ENCODE measurements at regions of chr10 and their contacts with region 1.

Region 1: DNA sequence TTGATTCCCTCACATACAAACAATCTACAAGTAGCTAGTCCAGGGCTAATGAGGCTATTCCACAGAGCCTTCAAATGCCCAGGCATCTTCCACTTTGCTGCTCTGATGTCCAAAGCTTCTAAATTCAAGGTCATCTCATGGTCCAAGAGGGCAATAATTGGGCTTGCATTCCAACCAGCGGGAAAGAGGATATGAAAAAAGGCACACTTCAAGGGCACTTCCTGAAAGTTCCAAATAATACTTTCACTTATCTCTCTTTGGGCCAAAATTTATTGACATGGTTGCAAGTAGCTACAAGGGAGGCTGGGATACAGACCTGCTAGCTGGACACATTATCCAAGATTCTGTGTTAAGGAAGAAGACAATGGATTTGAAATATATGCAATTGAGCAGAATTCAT is 25.2 kb upstream of the APBB1IP start:
- DNase-seq: no peak
- ATAC-seq: no peak
- H3K4me3 ChIP-seq: no peak overlapping the region
- H3K27ac ChIP-seq: no peak overlapping the region
- H3K4me1 ChIP-seq: peaks cover 26% of the 10 kb centered on the region
- H3K27me3 ChIP-seq: no peaks in the 10 kb centered on the region
- CTCF ChIP-seq: no peak
- EP300 ChIP-seq: no peak
- POLR2A ChIP-seq: no peak
- RAD21 ChIP-seq: no peak

Region 2: DNA sequence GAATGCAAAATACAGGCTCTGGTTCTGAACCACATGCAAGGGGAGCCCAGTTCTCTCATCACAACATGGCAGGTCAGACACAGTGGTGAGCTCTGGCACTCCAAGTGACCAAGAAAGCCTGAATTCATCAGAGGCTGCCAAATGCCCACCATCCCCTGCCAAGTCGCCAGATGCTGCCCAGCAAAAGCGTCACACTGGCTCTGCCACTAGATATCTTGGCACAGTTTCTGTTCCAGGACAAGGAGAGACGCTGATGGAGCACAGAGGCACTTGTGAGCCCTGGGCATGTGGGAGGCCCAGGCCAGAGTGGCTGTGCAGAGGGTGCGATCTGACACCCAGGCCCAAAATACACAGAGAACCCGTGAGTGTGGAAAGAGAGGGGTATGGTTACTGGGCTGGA is 138.5 kb before region 1 on chr10:
- CTCF ChIA-PET with region 1: no interaction called
- POLR2A ChIA-PET with region 1: no interaction called
- RAD21 ChIA-PET with region 1: no interaction called
- SMC1A ChIA-PET with region 1: no interaction called
- in situ Hi-C with region 1: no loop called
- intact Hi-C with region 1: no loop called
- DNase-seq: no peak
- ATAC-seq: no peak
- H3K4me3 ChIP-seq: no peak overlapping the region
- H3K27ac ChIP-seq: no peak overlapping the region
- H3K4me1 ChIP-seq: no peaks in the 10 kb centered on the region
- H3K27me3 ChIP-seq: no peaks in the 10 kb centered on the region
- CTCF ChIP-seq: no peak
- EP300 ChIP-seq: no peak
- POLR2A ChIP-seq: no peak
- RAD21 ChIP-seq: no peak

Region 3: DNA sequence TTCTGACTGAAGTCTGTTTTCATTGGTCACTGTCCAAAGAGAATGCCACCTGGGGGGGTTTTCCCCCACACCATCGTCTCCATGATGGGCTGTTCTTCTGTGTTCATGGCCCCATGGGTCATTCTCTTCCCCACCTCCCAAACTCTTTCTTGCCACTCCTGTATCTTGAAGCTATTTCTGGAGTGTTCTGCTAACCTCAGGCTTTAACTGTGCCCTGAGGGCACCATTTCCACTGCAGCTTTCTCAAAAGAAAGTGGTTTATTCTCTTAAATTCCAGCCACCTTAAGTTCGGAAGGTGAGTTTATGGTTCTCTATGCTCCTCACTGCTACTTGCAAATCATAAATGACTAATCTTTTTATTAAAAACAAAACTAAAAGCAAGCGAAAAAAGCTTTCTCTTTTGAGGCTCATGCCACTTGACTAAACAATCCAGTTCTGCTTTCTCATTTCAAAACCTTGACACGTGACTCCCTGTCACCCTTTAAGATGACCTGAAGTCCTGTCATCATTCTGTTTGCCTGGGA is 17.8 kb after region 1 on chr10:
- CTCF ChIA-PET with region 1: interaction called, 4 read pairs
- POLR2A ChIA-PET with region 1: interaction called, 8 read pairs
- RAD21 ChIA-PET with region 1: interaction called, 17 read pairs
- SMC1A ChIA-PET with region 1: interaction called, 69 read pairs
- in situ Hi-C with region 1: no loop called
- intact Hi-C with region 1: no loop called
- DNase-seq: peak; percentile 91
- ATAC-seq: peak; percentile 92
- H3K4me3 ChIP-seq: peak overlapping the region; percentile 44
- H3K27ac ChIP-seq: peak overlapping the region; percentile 94
- H3K4me1 ChIP-seq: peaks cover 19% of the 10 kb centered on the region
- H3K27me3 ChIP-seq: no peaks in the 10 kb centered on the region
- CTCF ChIP-seq: no peak
- EP300 ChIP-seq: peak; percentile 38 to 60; a peak in 2 of 4 replicates
- POLR2A ChIP-seq: no peak
- RAD21 ChIP-seq: no peak

Region 4: GRCh38 chr10:26566525-26567350 is 153.8 kb after region 1 on chr10:
- CTCF ChIA-PET with region 1: no interaction called
- POLR2A ChIA-PET with region 1: no interaction called
- RAD21 ChIA-PET with region 1: no interaction called
- SMC1A ChIA-PET with region 1: no interaction called
- in situ Hi-C with region 1: no loop called
- intact Hi-C with region 1: no loop called
- DNase-seq: no peak
- ATAC-seq: no peak
- H3K4me3 ChIP-seq: no peak overlapping the region
- H3K27ac ChIP-seq: no peak overlapping the region
- H3K4me1 ChIP-seq: no peaks in the 10 kb centered on the region
- H3K27me3 ChIP-seq: no peaks in the 10 kb centered on the region
- CTCF ChIP-seq: no peak
- EP300 ChIP-seq: no peak
- POLR2A ChIP-seq: no peak
- RAD21 ChIP-seq: no peak